Ascending aorta (tissue), 2 donors: ENCODE measurements at regions of chr20 and their contacts with region 1.

Region 1: GRCh38 chr20:58888521-58889333 is 36.2 kb downstream of the GNAS start:
- DNase-seq: peak; percentile 45 to 89
- H3K4me3 ChIP-seq: peak overlapping the region; percentile 85 to 89
- H3K27ac ChIP-seq: peak overlapping the region; percentile 99 to 100
- H3K4me1 ChIP-seq: peaks cover 0 to 6% of the 10 kb centered on the region in 2 donors
- H3K27me3 ChIP-seq: no peaks in the 10 kb centered on the region
- CTCF ChIP-seq: peak in 1 of 3 experiments; percentile 2

Region 2: DNA sequence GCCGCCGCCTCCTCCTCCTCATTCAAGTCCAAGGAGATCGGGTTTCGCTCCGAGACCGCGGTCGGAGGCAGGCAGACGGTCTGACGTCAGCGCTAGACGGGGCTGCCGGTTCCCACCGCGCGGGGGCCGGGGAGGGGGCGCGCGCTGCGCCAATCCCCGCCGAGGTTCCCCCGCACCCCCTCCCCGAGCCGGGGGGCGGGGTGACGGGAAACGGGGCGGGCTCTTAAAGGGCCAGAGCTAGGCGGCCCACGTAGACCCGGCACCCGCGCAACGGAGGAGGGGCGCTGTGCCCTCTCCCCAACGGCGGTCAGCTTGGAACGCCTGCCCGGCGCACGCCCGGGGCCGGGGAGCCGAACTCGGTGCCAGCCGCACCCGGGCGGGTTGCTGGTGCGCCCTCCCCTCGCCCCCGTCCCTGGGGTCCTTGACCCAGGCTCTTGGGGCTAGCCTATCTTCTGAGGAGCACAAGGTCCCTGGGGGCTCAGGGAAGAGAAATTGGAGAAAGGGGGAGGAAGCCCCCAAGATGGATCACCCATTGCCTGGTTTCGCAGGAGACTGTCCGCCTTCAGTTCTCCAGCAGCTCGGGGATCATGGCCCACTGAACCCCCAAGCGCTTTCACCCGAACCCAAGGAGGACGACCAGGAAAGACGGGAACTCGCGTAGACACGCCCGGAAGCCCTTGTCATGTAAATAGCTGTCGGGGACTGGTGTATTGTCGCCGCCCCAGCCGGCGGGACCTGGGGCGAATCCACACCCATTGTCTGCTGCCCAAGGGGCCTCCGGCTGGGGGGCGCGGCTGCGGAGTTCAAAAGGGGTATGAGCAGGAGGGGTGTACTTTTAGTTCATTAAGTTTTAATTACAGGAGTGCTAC is 1178.6 kb before region 1 on chr20 and contains the start of gene PMEPA1:
- intact Hi-C with region 1: loop called (anchors 10 kb)
- DNase-seq: peak; percentile 81 to 97
- H3K4me3 ChIP-seq: peak within 1 kb of the TSS; percentile 73 to 79
- H3K27ac ChIP-seq: peak within 1 kb of the TSS; percentile 94 to 97
- H3K4me1 ChIP-seq: peaks cover 23 to 50% of the 10 kb centered on the region in 2 donors
- H3K27me3 ChIP-seq: no peaks in the 10 kb centered on the region
- CTCF ChIP-seq: no peak
- total RNA-seq, gene PMEPA1: 56.8 TPM

Region 3: DNA sequence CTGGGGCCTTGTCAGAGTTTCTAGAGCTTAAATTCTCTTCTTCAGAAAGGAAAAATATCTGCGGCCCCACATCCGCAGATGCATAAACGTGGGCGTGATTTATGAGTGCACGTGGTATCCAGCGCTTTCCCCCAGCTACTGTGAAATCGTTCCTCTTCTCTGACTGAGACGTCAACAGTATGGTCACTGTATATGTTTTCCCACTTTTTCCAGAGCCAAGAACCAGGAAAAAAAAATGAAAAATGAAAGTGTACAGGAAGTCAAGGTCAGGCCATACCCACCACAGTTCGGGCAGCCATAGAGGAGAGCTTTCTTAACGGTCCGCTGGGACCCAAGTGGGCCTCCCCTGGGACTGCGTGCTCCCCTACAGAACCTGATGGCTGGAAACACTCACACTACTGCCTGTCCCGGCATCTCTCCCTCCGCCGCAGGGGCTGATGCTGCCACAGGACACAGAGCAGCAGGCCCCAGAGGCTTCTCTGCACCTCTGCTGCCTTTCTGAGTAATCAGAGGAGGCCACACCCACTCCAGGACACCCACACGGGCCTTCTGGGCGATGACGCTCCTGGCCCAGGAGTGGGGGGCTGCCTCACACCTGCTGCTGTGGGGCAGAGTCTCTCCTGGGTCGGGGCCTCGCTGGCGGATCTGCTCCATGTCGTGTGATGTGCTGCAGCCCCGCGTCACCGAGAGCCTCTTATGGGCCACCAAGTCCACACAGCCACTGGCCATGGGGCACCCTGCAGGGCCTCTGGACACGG is 254.0 kb before region 1 on chr20:
- intact Hi-C with region 1: no loop called
- DNase-seq: peak in 1 of 2 donors; percentile 61
- H3K4me3 ChIP-seq: no peak overlapping the region
- H3K27ac ChIP-seq: no peak overlapping the region
- H3K4me1 ChIP-seq: no peaks in the 10 kb centered on the region
- H3K27me3 ChIP-seq: no peaks in the 10 kb centered on the region
- CTCF ChIP-seq: no peak

Region 4: DNA sequence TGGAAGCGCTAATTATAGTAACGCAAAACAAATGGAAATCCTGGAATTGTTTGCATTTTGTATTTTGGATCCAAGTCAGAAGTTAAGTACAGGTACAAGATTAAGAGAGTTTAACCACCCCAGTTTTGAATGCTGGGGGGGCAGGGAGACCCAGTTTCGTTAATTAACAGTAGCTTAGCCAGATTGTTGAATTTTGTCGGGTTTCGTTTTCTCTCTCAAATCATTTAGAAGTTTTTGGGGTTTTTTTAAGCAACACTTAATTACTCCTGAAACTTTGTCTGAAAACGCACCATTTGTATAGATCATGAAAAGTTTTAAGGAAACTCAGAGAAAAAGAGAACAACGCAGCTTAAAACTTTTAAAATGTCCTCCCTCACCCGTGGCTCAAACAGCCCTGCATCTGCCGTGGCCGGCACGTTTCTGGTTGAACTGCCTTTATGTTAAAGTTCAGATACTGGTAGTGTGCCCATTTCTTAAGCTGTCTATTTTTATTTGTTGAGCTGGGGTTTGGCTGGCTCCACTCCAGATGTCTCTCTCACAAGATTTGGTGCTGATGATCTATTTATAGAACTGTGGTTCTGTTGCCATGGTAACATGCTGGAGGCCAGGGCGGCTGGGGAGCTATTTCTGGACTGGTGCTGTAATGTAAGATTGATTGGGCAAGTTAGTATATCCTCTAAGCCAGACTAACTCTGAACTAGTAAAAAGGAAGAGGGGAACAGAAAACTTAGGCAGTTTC is 18.8 kb after region 1 on chr20:
- intact Hi-C with region 1: loop called (anchors 1 kb)
- DNase-seq: peak; percentile 90 to 98
- H3K4me3 ChIP-seq: peak overlapping the region; percentile 31 to 51
- H3K27ac ChIP-seq: peak overlapping the region; percentile 83 to 92
- H3K4me1 ChIP-seq: peaks cover 15 to 25% of the 10 kb centered on the region in 2 donors
- H3K27me3 ChIP-seq: no peaks in the 10 kb centered on the region
- CTCF ChIP-seq: no peak

Region 5: GRCh38 chr20:58980700-58981627 is 92.2 kb after region 1 on chr20 and contains the start of gene NELFCD:
- intact Hi-C with region 1: loop called (anchors 2 kb)
- DNase-seq: peak in 1 of 2 donors; percentile 92
- H3K4me3 ChIP-seq: peak within 1 kb of the TSS; percentile 85 to 96
- H3K27ac ChIP-seq: peak within 1 kb of the TSS; percentile 83 to 85
- H3K4me1 ChIP-seq: peaks cover 3 to 15% of the 10 kb centered on the region in 2 donors
- H3K27me3 ChIP-seq: no peaks in the 10 kb centered on the region
- CTCF ChIP-seq: no peak
- total RNA-seq, gene NELFCD: 20.8 TPM

Region 6: GRCh38 chr20:59032023-59032712 is 143.4 kb after region 1 on chr20 and contains the start of gene ATP5F1E:
- intact Hi-C with region 1: loop called (anchors 5 kb)
- DNase-seq: peak; percentile 85 to 98
- H3K4me3 ChIP-seq: peak within 1 kb of the TSS; percentile 73 to 92
- H3K27ac ChIP-seq: peak within 1 kb of the TSS; percentile 72 to 87
- H3K4me1 ChIP-seq: peaks cover 0 to 22% of the 10 kb centered on the region in 2 donors
- H3K27me3 ChIP-seq: no peaks in the 10 kb centered on the region
- CTCF ChIP-seq: no peak
- total RNA-seq, gene ATP5F1E: 12.7 TPM

Region 7: GRCh38 chr20:59940174-59940971 is 1051.6 kb after region 1 on chr20 and contains the starts of genes FAM217B and PPP1R3D:
- intact Hi-C with region 1: loop called (anchors 5 kb)
- DNase-seq: peak; percentile 95 to 99
- H3K4me3 ChIP-seq: peak within 1 kb of the TSS; percentile 79 to 88
- H3K27ac ChIP-seq: peak within 1 kb of the TSS; percentile 92 to 94
- H3K4me1 ChIP-seq: peaks cover 14 to 31% of the 10 kb centered on the region in 2 donors
- H3K27me3 ChIP-seq: no peaks in the 10 kb centered on the region
- CTCF ChIP-seq: peak in 1 of 3 experiments; percentile 3
- total RNA-seq, gene FAM217B: 2.6 TPM
- total RNA-seq, gene PPP1R3D: 3.2 TPM